MCF 10A (cell line): ENCODE measurements at regions of chr1 and their contacts with region 1.

Region 1: GRCh38 chr1:211965108-211965805 is 70.1 kb downstream of the INTS7 start:
- DNase-seq: no peak
- H3K4me3 Mint-ChIP-seq: no peak overlapping the region
- H3K27ac Mint-ChIP-seq: no peak overlapping the region
- H3K4me1 Mint-ChIP-seq: no peaks in the 10 kb centered on the region
- H3K27me3 Mint-ChIP-seq: no peaks in the 10 kb centered on the region
- CTCF ChIP-seq: no peak

Region 2: DNA sequence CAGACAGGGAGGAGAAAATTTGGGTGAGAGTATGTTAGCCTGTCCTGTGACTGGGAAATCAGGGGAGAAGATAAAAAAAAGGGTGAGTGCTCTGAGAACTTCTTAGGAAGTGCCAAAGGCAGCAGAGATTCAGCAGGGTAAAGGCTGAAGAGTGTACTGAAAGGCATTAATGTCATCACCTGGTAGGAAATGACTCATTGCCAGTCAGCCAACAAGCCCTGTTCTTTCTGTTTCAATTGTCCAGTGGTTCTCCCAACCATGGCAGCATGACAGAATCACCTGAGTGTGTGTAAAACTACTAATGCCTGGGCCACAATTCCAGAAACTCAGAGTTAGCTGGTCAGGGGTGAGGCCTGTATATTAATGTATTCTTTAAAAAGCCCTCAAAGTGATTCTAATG is 13.4 kb before region 1 on chr1:
- CTCF ChIA-PET with region 1: interaction called, 4 read pairs
- POLR2A ChIA-PET with region 1: interaction called, 13 read pairs
- intact Hi-C with region 1: no loop called
- DNase-seq: peak; percentile 98
- H3K4me3 Mint-ChIP-seq: no peak overlapping the region
- H3K27ac Mint-ChIP-seq: no peak overlapping the region
- H3K4me1 Mint-ChIP-seq: peaks cover 17% of the 10 kb centered on the region
- H3K27me3 Mint-ChIP-seq: no peaks in the 10 kb centered on the region
- CTCF ChIP-seq: no peak